Caco-2 (cell line): ENCODE measurements at regions of chr3 and their contacts with region 1.

Region 1: DNA sequence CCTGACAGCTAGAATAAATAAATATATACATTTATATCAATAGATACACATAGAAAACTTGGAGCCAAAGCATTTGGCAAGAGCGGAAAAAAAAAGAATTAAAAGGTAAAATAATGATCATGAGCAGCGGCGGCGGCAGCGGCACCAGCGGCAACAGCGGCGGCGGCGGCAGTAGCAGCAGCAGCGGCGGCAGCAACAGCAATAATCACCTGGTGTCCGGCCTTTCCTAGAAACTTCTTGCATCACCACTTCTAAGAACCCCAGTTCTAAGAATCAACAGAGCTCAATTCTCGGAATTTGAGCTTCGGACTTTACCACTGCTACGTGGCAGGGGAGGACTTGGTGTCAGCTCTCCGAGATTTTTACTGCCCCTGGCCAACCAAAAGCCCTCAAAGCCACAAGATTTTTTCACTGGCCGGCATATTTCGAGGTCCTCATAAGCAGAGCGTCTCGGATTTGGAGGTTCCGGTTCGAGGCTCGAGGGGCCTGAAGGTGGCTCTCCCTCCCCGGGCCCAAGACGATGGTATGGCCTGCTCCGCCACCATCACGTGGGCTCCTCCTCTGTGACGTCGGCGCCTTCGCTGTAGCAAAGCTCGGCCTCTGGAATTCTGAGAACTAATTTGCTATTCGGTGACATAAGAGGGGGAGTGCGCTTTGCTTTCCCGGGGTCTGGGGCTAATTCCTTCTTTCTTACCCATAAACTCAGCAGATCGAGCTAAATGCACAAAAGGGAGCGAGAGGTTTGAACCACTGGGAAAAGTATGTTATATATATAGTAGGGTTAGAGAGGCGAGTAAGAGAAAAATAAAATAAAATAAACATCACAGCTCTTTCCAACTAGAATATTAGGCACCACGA is at the start of gene BCL6:
- DNase-seq: peak; percentile 91 to 95
- H3K4me3 ChIP-seq: peak within 1 kb of the TSS; percentile 73
- H3K4me3 Mint-ChIP-seq: peak within 1 kb of the TSS; percentile 98
- H3K27ac Mint-ChIP-seq: peak within 1 kb of the TSS; percentile 97
- H3K4me1 ChIP-seq: peaks cover 37% of the 10 kb centered on the region
- H3K4me1 Mint-ChIP-seq: peaks cover 12% of the 10 kb centered on the region
- H3K27me3 ChIP-seq: no peaks in the 10 kb centered on the region
- H3K27me3 Mint-ChIP-seq: no peaks in the 10 kb centered on the region
- CTCF ChIP-seq: no peak
- total RNA-seq, gene BCL6: 35.8 and 40.4 TPM in 2 replicates

Region 2: DNA sequence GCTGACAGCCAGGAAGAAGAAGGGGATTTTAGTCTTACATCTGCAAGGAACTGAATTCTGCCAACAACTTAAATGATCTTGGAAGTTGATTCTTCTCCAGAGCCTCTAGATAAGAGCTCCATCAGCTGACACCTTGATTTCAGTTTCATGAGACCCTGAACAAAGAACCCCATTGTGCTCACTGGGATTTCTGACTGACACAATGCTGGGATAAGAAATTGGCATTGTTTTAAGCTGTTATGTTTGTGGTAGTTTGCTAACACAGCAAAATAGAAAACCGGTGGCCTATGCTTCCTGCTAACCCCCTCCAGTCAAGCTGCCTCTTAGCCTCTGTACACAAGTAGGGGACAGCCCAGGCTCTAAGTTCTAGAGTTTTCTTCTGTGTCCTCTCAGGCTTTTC is 490.1 kb before region 1 on chr3:
- CTCF ChIA-PET with region 1: no interaction called
- POLR2A ChIA-PET with region 1: no interaction called
- intact Hi-C with region 1: no loop called
- DNase-seq: no peak
- H3K4me3 ChIP-seq: no peak overlapping the region
- H3K4me3 Mint-ChIP-seq: no peak overlapping the region
- H3K27ac Mint-ChIP-seq: no peak overlapping the region
- H3K4me1 ChIP-seq: no peaks in the 10 kb centered on the region
- H3K4me1 Mint-ChIP-seq: no peaks in the 10 kb centered on the region
- H3K27me3 ChIP-seq: no peaks in the 10 kb centered on the region
- H3K27me3 Mint-ChIP-seq: no peaks in the 10 kb centered on the region
- CTCF ChIP-seq: no peak

Region 3: GRCh38 chr3:187792521-187792920 is 47.1 kb after region 1 on chr3:
- CTCF ChIA-PET with region 1: no interaction called
- POLR2A ChIA-PET with region 1: no interaction called
- intact Hi-C with region 1: loop called (anchors 5 kb)
- DNase-seq: no peak
- H3K4me3 ChIP-seq: no peak overlapping the region
- H3K4me3 Mint-ChIP-seq: no peak overlapping the region
- H3K27ac Mint-ChIP-seq: no peak overlapping the region
- H3K4me1 ChIP-seq: peaks cover 47% of the 10 kb centered on the region
- H3K4me1 Mint-ChIP-seq: peaks cover 40% of the 10 kb centered on the region
- H3K27me3 ChIP-seq: no peaks in the 10 kb centered on the region
- H3K27me3 Mint-ChIP-seq: no peaks in the 10 kb centered on the region
- CTCF ChIP-seq: no peak

Region 4: GRCh38 chr3:187828579-187829452 is 83.4 kb after region 1 on chr3:
- CTCF ChIA-PET with region 1: no interaction called
- POLR2A ChIA-PET with region 1: no interaction called
- intact Hi-C with region 1: loop called (anchors 1 kb)
- DNase-seq: peak; percentile 41 to 63
- H3K4me3 ChIP-seq: no peak overlapping the region
- H3K4me3 Mint-ChIP-seq: peak overlapping the region; percentile 34
- H3K27ac Mint-ChIP-seq: peak overlapping the region; percentile 42
- H3K4me1 ChIP-seq: peaks cover 22% of the 10 kb centered on the region
- H3K4me1 Mint-ChIP-seq: peaks cover 18% of the 10 kb centered on the region
- H3K27me3 ChIP-seq: no peaks in the 10 kb centered on the region
- H3K27me3 Mint-ChIP-seq: no peaks in the 10 kb centered on the region
- CTCF ChIP-seq: no peak

Region 5: GRCh38 chr3:188052169-188053030 is 307.0 kb after region 1 on chr3:
- CTCF ChIA-PET with region 1: interaction called, 15 read pairs
- POLR2A ChIA-PET with region 1: interaction called, 11 read pairs
- intact Hi-C with region 1: loop called (anchors 1 kb)
- DNase-seq: peak; percentile 76
- H3K4me3 ChIP-seq: no peak overlapping the region
- H3K4me3 Mint-ChIP-seq: peak overlapping the region; percentile 48
- H3K27ac Mint-ChIP-seq: peak overlapping the region; percentile 69
- H3K4me1 ChIP-seq: peaks cover 61% of the 10 kb centered on the region
- H3K4me1 Mint-ChIP-seq: peaks cover 25% of the 10 kb centered on the region
- H3K27me3 ChIP-seq: no peaks in the 10 kb centered on the region
- H3K27me3 Mint-ChIP-seq: no peaks in the 10 kb centered on the region
- CTCF ChIP-seq: peak in 1 of 2 experiments; percentile 20

Region 6: DNA sequence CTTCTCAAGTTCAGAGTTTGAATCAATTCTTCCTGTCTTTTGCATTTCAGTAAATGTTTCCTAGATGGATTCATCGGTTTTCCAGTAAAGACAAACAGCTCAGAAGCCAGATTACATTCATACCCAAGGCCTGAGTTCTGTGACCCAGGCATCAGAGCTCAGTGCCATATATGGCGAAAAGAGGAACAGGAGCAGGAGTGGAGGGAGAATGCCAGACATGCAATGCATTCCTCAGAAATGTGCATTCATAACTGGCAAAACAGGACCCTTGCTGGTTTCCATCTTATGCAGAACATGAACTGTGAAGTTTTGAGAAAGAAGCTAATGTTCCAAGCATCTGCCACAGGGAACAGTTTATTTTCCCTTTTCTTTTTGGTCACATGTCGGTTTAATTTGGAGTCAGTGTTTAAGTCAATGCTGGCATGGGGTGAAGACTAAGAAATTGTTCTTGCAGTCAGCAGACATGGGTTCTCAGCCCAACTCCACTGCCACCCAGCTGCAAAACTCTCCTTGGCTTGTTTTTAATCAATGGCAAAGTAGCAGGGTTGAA is 525.1 kb after region 1 on chr3:
- CTCF ChIA-PET with region 1: interaction called, 3 read pairs
- POLR2A ChIA-PET with region 1: interaction called, 12 read pairs
- intact Hi-C with region 1: no loop called
- DNase-seq: peak; percentile 71 to 78
- H3K4me3 ChIP-seq: no peak overlapping the region
- H3K4me3 Mint-ChIP-seq: peak overlapping the region; percentile 47
- H3K27ac Mint-ChIP-seq: peak overlapping the region; percentile 77
- H3K4me1 ChIP-seq: peaks cover 75% of the 10 kb centered on the region
- H3K4me1 Mint-ChIP-seq: peaks cover 40% of the 10 kb centered on the region
- H3K27me3 ChIP-seq: no peaks in the 10 kb centered on the region
- H3K27me3 Mint-ChIP-seq: no peaks in the 10 kb centered on the region
- CTCF ChIP-seq: no peak

Region 7: DNA sequence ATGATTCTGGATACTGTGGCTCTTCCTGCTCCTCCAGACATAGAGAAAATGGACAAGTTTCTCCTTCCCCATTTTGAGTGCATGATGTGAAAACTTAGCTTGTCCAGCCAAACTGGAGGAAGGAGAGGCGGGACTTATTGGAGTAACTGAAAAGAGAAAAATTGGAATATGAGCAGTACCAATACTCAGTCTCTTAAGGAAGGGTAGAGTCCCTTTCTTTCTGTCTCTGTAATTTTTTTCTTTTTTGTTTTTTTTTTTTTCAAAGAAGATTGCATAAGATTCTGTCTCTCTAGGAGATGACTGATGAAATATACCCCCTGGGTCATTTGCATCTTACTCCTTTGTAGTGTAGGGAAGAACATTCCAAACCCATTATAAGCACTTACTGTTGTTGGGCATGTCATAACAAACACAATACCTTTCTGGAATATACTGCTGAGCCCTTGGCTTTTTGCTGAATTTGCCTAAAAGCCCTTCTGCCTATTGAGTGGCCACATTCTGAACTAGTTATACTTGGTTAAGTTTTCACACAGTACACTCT is 928.3 kb after region 1 on chr3:
- CTCF ChIA-PET with region 1: no interaction called
- POLR2A ChIA-PET with region 1: no interaction called
- intact Hi-C with region 1: loop called (anchors 10 kb)
- DNase-seq: peak in 1 of 2 experiments; percentile 56
- H3K4me3 ChIP-seq: no peak overlapping the region
- H3K4me3 Mint-ChIP-seq: no peak overlapping the region
- H3K27ac Mint-ChIP-seq: peak overlapping the region; percentile 44
- H3K4me1 ChIP-seq: peaks cover 36% of the 10 kb centered on the region
- H3K4me1 Mint-ChIP-seq: peaks cover 26% of the 10 kb centered on the region
- H3K27me3 ChIP-seq: no peaks in the 10 kb centered on the region
- H3K27me3 Mint-ChIP-seq: no peaks in the 10 kb centered on the region
- CTCF ChIP-seq: no peak